Activated CD4-positive, alpha-beta T cell treated with anti-CD3 and anti-CD28 coated beads, Interleukin-2, amount 10 ng/mL, durations not matched to agents 24 days and 14 days (primary cell): ENCODE measurements at regions of chr10 and their contacts with region 1.

Region 1: DNA sequence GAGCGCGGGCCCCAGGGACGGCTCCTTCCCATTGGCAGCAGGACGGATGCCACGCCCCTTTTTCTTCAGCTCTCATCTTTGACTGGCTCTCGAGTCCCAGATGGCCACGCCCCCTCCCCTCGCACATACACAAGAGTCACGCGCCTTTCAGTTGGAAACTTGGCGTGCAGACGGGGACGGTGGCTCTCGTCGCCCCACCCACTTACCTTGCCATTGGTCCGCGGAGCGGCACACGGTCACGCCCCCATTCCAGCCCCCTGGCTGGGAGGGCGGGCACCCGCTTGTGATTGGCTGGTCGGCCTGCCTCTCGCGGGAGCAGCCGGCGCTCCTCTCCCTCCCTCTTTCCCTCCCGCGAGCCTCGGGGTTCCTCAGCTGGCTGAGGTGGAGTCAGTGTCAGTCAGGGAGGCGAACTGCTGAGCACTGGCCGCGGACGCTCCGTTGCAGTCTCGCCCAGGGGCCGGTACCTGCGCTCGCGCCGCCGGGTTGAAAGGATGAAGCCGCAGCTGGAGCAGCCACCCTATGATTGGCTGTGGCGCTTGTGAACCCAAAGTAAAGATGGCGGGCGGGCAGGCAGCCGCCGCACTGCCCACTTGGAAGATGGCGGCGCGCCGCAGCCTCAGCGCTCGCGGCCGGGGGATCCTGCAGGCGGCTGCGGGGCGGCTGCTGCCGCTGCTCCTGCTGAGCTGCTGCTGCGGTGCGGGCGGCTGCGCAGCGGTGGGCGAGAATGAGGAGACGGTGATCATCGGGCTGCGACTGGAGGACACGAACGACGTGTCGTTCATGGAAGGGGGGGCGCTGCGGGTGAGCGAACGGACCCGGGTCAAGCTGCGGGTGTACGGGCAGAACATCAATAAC is at the start of gene CNNM2:
- DNase-seq: peak; percentile 100
- H3K4me3 Mint-ChIP-seq: peak within 1 kb of the TSS; percentile 96
- H3K27ac Mint-ChIP-seq: peak within 1 kb of the TSS; percentile 94
- H3K4me1 Mint-ChIP-seq: peaks cover 43% of the 10 kb centered on the region
- H3K27me3 Mint-ChIP-seq: peaks cover 2% of the 10 kb centered on the region
- total RNA-seq, gene CNNM2: 5.6 and 6.7 TPM in 2 replicates

Region 2: GRCh38 chr10:102935939-102936605 is 17.9 kb after region 1 on chr10:
- intact Hi-C with region 1: loop called (anchors 1 kb)
- DNase-seq: no peak
- H3K4me3 Mint-ChIP-seq: peak overlapping the region; percentile 43
- H3K27ac Mint-ChIP-seq: peak overlapping the region; percentile 85
- H3K4me1 Mint-ChIP-seq: peaks cover 11% of the 10 kb centered on the region
- H3K27me3 Mint-ChIP-seq: no peaks in the 10 kb centered on the region

Region 3: GRCh38 chr10:103040418-103040817 is 122.2 kb after region 1 on chr10:
- intact Hi-C with region 1: no loop called
- DNase-seq: no peak
- H3K4me3 Mint-ChIP-seq: no peak overlapping the region
- H3K27ac Mint-ChIP-seq: no peak overlapping the region
- H3K4me1 Mint-ChIP-seq: no peaks in the 10 kb centered on the region
- H3K27me3 Mint-ChIP-seq: no peaks in the 10 kb centered on the region

Region 4: DNA sequence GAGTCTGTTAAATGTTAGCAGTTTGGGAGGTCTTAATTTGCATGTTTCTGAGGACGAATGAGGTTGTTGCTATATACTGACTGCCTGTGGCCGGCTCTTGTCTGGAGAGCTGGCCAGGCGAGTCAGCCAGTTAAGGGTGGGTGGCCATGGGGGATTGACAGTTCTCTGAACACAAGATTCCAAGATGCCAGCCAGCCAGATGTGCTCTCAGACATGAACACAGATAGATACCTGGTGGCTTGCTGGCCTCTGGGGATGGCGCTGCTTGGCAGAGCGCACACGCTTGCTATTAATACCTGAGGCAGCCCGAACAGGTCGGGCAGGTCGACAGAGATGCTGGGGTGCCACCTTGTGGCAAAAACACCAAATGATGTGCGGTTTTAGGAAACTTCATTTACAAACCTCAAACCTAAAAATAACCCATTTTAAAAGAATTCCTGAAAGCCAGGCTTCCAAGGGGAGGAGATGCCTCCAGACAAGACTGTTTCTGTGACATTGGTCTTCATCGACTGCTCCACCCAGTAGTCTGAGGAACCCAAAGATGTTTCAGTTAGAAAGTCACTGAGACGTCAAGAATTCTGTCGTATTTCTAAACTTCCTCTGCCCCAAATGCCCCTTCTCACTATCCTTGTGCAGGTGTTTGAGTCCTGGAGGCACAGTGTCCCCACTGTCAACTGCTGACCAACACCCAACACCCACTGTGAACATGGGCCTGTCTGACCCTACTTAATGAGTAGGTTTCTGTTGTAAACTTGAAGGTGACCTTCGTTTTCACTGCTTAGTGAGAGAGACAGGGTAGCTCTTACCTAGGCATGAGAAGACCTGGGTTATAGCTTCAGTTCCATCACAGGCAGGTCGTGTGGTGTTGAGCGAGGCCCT is 151.5 kb after region 1 on chr10:
- intact Hi-C with region 1: loop called (anchors 1 kb)
- DNase-seq: peak; percentile 91
- H3K4me3 Mint-ChIP-seq: peak overlapping the region; percentile 35
- H3K27ac Mint-ChIP-seq: peak overlapping the region; percentile 75
- H3K4me1 Mint-ChIP-seq: peaks cover 28% of the 10 kb centered on the region
- H3K27me3 Mint-ChIP-seq: no peaks in the 10 kb centered on the region

Region 5: GRCh38 chr10:103244663-103245271 is 326.6 kb after region 1 on chr10:
- intact Hi-C with region 1: loop called (anchors 1 kb)
- DNase-seq: peak; percentile 89
- H3K4me3 Mint-ChIP-seq: no peak overlapping the region
- H3K27ac Mint-ChIP-seq: no peak overlapping the region
- H3K4me1 Mint-ChIP-seq: peaks cover 19% of the 10 kb centered on the region
- H3K27me3 Mint-ChIP-seq: peaks cover 18% of the 10 kb centered on the region

Region 6: GRCh38 chr10:103470761-103471653 is 552.8 kb after region 1 on chr10:
- intact Hi-C with region 1: no loop called
- DNase-seq: peak; percentile 91
- H3K4me3 Mint-ChIP-seq: peak overlapping the region; percentile 59
- H3K27ac Mint-ChIP-seq: peak overlapping the region; percentile 89
- H3K4me1 Mint-ChIP-seq: peaks cover 51% of the 10 kb centered on the region
- H3K27me3 Mint-ChIP-seq: peaks cover 2% of the 10 kb centered on the region

Region 7: DNA sequence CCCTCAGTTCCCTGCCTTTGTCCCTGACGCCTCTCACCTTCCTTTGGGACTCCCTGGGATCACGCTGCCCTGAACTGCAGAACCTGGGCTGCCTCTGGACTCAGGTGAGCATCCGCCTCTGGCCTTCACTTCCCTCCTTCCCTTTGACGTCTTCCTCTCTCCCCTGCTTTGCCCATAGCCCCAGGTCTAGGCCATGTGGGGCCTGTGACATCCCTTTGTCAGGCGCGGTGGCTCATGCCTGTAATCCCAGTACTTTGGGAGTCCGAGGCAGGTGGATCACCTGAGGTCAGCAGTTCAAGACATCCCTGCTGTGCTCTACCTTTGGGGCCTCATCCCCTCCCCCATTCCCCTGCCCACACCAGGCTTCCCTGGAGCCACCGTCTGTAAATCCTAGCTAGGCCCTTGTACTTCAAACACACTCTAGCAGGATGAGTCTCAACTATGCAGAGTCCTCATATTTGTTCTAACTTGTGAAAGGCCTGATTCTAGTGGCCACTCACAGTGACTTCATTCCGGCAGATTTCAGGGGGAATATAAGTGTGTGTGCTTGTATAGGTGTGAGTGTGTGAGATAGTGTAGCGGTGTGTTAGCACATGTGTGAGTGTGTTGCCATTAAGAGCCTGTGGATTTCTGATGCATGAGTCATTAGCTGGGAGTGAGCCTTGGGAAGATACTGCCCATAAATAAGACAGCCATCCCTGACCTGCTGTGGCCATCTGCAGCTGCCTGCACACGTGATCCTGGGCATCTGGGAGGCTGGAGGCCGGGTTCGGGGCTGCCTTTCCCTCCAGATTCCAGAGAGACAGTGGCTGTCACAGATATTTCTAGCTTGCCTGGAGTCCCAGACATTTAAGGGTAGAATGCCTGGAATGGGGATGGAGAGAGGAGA is 573.5 kb after region 1 on chr10:
- intact Hi-C with region 1: loop called (anchors 5 kb)
- DNase-seq: no peak
- H3K4me3 Mint-ChIP-seq: no peak overlapping the region
- H3K27ac Mint-ChIP-seq: peak overlapping the region; percentile 6
- H3K4me1 Mint-ChIP-seq: peaks cover 22% of the 10 kb centered on the region
- H3K27me3 Mint-ChIP-seq: peaks cover 55% of the 10 kb centered on the region